Natural killer cell (primary cell): ENCODE measurements at regions of chr5 and their contacts with region 1.

Region 1: DNA sequence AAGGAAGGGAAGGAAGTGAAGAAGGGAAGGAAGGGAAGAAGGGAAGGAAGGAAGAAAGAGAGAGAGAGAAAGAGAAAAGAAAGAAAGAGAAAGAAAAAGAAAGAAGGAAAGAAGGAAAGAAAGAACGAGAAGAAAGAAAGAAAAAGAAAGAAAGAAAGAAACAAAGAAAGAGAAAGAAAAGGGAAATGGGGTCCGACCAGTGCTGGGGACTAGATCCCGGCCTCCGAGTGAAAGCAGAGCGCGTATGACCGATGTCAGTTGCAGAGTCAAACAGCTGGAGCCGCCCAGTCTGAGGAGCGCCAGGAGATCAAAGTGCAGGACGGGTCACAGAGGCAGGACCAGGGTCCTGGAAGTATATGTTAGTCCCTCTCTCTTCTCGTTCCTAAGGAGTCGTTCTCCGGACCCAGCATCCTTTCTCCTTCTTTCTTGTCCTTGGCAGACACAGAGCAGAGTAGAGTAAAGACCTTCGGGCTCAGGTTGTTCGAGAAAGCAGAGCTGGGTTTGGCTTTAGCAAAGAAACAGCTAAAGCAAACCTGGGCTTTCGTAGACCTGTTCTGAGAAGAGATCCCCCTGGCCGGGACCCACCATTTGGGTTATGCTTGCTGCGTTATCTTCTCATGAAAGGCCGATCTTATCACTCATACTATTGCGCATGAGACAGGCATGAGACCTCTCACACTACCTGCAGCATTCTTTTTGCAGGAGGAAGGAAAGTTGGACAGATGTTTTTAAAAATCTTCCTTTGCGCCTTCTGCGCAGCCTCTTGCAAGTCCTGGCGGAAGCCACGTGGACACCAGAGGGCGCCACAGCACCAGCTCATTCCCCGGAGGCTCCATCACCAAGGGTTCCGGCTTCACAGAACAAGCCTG is 305.2 kb upstream of the MSX2 start:
- DNase-seq: peak; percentile 67 to 85
- ATAC-seq: peak; percentile 65 to 94 (median 84)
- H3K4me3 ChIP-seq: no peak overlapping the region
- H3K4me3 Mint-ChIP-seq: peak overlapping the region; percentile 13
- H3K27ac ChIP-seq: no peak overlapping the region
- H3K27ac Mint-ChIP-seq: no peak overlapping the region
- H3K4me1 ChIP-seq: peaks cover 9% of the 10 kb centered on the region
- H3K4me1 Mint-ChIP-seq: peaks cover 0 to 4% of the 10 kb centered on the region in 2 donors
- H3K27me3 ChIP-seq: no peaks in the 10 kb centered on the region
- H3K27me3 Mint-ChIP-seq: peaks cover 6 to 28% of the 10 kb centered on the region in 2 donors
- CTCF ChIP-seq: peak; percentile 65

Region 2: DNA sequence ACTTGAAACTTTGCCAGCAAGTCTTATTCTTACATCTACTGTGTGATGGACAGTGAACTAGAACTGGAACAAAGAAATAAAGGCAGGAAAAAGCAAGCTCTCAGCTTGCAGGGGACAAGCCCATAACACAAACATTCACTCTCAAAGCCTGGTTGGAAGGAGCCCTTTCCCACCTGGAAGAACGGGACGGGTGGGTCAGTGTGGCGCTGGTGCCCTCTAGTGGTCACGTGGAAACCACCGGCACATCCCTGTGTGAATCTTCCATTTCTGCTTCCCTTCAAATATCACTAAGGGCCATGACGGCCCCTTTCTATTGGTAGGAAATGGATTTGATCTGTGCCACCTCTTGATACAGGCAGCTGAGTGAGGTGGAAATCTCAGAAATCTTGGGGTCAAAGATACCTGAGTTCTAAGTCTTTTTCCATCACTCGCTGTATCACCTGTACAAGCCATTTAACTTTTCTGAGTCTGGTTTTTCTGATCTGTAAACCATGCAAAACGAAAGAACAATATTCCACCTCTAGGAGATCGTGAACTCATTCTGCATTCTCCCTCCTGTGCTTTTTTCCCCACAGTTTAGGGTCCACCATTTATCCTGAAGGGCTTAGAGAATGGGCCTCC is 516.8 kb after region 1 on chr5:
- intact Hi-C with region 1: loop called (anchors 1 kb)
- DNase-seq: peak; percentile 22 to 53
- ATAC-seq: peak in 1 of 3 donors; percentile 54
- H3K4me3 ChIP-seq: no peak overlapping the region
- H3K4me3 Mint-ChIP-seq: no peak overlapping the region
- H3K27ac ChIP-seq: no peak overlapping the region
- H3K27ac Mint-ChIP-seq: no peak overlapping the region
- H3K4me1 ChIP-seq: no peaks in the 10 kb centered on the region
- H3K4me1 Mint-ChIP-seq: no peaks in the 10 kb centered on the region
- H3K27me3 ChIP-seq: no peaks in the 10 kb centered on the region
- H3K27me3 Mint-ChIP-seq: peaks cover 5 to 10% of the 10 kb centered on the region in 2 donors
- CTCF ChIP-seq: peak; percentile 80